Activated T-helper 1 cell treated with anti-CD3 and anti-CD28 coated beads, Interleukin-12 subunit alpha, Interleukin-12 subunit beta, Interleukin-2, Interleukin-4 antibody, amounts not matched to agents 30 ng/mL and 10 ng/mL and 1 ng/mL, durations not matched to agents 14 hours and 24 hours and 36 hours (primary cell): ENCODE measurements at regions of chr17 and their contacts with region 1.

Region 1: DNA sequence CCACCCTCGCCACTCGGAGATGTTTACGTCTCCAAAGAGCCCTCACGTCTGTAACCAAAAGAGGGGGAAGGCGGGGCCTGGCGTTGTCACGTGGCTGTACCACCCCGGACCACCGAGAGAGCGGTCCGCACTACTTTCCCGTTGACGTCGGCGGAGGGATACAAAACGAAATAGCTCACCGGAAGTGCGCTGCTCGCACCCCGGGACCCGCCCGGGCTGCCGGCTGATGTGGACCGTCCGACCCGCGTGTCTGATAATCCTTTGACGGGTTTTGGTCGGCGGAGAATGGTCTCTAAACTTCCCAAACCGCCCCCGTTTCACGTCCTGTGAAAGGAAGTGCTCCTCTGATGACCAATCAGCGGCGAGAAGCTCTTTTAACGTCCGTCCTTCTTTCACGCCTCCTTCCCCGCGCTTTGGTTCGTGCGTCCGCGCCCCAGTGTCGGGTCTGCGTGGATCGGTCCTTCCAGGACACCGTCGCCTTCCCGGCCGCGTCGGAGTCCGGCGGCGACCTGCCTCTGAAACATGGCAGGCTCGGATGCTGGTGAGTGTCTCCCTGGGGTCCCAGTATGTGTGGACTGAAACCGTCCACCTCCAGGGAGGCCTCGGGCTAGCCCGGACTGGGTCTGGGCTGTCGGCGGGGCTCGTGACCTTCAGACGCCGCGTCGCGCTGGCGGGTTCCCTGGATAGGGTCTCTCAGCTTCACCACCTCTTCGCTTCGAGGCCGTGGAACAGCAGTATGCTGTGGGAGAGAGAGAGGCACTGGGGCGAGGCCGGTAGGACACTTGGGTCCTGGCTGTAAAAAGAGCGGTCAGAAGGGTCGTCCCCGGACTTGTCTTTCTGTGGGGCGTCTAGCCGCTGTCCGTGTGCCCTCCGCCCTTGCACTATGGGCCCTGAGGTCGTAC is at the start of gene CEP95:
- DNase-seq: peak; percentile 93
- H3K4me3 Mint-ChIP-seq: peak within 1 kb of the TSS; percentile 97
- H3K27ac Mint-ChIP-seq: peak within 1 kb of the TSS; percentile 99
- H3K4me1 Mint-ChIP-seq: peaks cover 48% of the 10 kb centered on the region
- H3K27me3 Mint-ChIP-seq: no peaks in the 10 kb centered on the region
- total RNA-seq, gene CEP95: 42.4 and 46.4 TPM in 2 replicates

Region 2: GRCh38 chr17:63827002-63827771 is 679.6 kb before region 1 on chr17 and contains the starts of genes FTSJ3 and PSMC5:
- intact Hi-C with region 1: loop called (anchors 5 kb)
- DNase-seq: peak; percentile 94
- H3K4me3 Mint-ChIP-seq: peak within 1 kb of the TSS; percentile 96
- H3K27ac Mint-ChIP-seq: peak within 1 kb of the TSS; percentile 98
- H3K4me1 Mint-ChIP-seq: peaks cover 71% of the 10 kb centered on the region
- H3K27me3 Mint-ChIP-seq: no peaks in the 10 kb centered on the region
- total RNA-seq, gene FTSJ3: 95.6 and 100 TPM in 2 replicates
- total RNA-seq, gene PSMC5: 185 and 195 TPM in 2 replicates

Region 3: DNA sequence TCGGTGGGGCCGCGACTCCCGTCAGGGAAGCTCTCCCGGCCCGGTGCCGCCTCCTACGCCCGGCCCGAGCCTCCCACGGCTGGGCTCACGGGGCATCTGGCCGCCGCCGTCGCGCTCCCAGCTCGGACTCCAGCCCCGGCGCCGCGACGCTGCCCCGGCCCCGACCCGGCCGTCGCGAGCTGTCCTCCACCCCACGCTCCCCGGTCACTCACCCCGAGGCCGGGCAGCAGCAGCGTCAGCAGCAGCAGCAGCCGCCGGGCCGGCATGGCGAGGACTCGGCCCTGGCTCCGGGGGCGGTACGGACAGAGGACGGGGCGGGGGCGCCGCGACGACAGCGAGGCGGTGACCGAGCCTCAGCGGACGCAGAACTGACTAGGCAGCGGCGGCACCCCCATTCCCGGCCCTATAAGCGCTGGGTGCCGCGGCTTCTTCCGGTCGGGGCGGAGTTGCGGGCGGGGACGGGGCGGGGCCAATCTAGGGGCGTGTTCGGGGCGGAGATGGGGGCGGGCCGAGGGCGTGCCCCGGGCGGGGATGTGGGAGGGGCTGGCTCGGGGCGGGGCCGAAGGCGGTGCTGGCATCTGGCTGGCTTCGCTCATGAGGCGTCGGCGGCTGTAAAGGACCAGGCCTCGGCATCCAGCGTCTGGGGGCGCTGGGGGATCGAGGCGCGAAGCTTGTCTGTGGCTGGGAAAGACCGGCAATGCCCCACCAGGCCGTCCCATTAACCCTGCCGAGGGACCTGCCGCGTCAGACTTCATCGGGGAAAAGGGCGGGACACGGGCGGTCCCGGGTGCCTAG is 376.9 kb before region 1 on chr17 and contains the start of gene ERN1:
- intact Hi-C with region 1: loop called (anchors 1 kb)
- DNase-seq: peak; percentile 88
- H3K4me3 Mint-ChIP-seq: peak within 1 kb of the TSS; percentile 98
- H3K27ac Mint-ChIP-seq: peak within 1 kb of the TSS; percentile 93
- H3K4me1 Mint-ChIP-seq: peaks cover 68% of the 10 kb centered on the region
- H3K27me3 Mint-ChIP-seq: no peaks in the 10 kb centered on the region
- total RNA-seq, gene ERN1: 90.0 and 91.6 TPM in 2 replicates

Region 4: GRCh38 chr17:64491034-64491859 is 15.6 kb before region 1 on chr17:
- intact Hi-C with region 1: loop called (anchors 2 kb)
- DNase-seq: peak; percentile 53
- H3K4me3 Mint-ChIP-seq: no peak overlapping the region
- H3K27ac Mint-ChIP-seq: no peak overlapping the region
- H3K4me1 Mint-ChIP-seq: peaks cover 30% of the 10 kb centered on the region
- H3K27me3 Mint-ChIP-seq: no peaks in the 10 kb centered on the region

Region 5: DNA sequence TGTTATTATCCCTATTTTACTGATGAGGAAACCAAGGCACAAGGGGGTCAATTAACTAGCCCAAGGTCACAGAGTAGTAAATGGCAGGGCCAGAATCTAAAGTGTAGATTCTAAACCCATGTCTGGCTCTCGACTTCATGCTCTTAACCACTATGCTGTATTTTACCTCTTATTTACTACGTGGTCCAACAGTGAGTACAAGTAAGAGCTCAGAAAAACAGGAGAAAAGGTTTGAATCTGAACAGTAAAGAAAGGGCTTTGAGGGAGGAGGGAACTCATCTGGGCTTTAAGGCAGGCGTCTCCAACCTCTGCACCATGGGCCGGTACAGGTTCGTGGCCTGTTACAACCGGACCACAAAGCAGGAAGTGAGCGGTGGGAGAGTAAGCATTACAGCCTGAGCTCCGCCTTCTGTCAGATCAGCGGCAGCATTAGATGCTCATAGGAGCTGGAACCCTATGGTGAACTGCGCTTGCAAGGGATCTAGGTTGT is 92.4 kb after region 1 on chr17:
- intact Hi-C with region 1: loop called (anchors 2 kb)
- DNase-seq: peak; percentile 56
- H3K4me3 Mint-ChIP-seq: peak overlapping the region; percentile 55
- H3K27ac Mint-ChIP-seq: peak overlapping the region; percentile 67
- H3K4me1 Mint-ChIP-seq: peaks cover 29% of the 10 kb centered on the region
- H3K27me3 Mint-ChIP-seq: no peaks in the 10 kb centered on the region

Region 6: DNA sequence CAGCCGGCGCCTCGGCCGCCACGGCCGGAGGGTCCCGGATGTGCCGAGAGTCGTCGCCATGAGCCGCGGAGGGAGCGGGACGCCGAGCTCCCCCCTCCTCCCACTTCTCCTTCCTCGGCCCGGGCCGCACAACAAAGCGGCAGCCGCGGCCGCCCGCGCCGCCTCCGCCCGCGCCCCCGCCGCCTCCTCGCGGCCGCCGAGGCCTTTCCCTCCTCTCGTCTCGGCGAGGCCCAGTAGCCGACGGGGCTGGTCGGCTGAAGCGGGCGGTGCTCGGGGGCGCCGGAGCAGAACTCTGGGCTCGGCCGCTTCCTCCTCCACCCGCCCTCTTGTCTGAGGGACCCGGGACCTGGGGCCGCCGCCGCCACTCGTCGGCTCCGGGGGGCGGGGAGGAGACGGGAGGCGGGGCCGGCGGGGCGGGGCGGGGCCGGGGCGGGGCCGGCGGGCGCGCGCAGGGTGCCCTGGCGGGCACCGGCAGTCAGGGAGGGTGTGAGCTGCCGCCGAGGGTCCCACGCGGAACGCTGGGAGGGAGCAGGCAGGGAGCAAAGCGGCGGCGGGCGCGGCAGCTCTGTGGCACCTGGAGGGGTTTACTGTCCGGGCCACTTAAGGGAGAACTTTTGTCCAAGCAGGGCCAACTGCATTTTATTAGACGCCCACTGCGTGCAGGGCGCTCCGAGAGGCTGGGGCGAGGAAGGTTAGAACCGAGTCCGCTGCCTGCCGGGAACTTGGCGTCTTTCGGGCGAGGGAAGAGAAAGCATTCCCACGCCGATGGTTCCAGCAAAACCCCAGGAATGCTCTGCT is 155.3 kb after region 1 on chr17 and contains the start of gene SMURF2:
- intact Hi-C with region 1: loop called (anchors 1 kb)
- DNase-seq: peak; percentile 74
- H3K4me3 Mint-ChIP-seq: peak within 1 kb of the TSS; percentile 95
- H3K27ac Mint-ChIP-seq: peak within 1 kb of the TSS; percentile 97
- H3K4me1 Mint-ChIP-seq: peaks cover 28% of the 10 kb centered on the region
- H3K27me3 Mint-ChIP-seq: peaks cover 4% of the 10 kb centered on the region
- total RNA-seq, gene SMURF2: 10.8 and 11.1 TPM in 2 replicates

Region 7: DNA sequence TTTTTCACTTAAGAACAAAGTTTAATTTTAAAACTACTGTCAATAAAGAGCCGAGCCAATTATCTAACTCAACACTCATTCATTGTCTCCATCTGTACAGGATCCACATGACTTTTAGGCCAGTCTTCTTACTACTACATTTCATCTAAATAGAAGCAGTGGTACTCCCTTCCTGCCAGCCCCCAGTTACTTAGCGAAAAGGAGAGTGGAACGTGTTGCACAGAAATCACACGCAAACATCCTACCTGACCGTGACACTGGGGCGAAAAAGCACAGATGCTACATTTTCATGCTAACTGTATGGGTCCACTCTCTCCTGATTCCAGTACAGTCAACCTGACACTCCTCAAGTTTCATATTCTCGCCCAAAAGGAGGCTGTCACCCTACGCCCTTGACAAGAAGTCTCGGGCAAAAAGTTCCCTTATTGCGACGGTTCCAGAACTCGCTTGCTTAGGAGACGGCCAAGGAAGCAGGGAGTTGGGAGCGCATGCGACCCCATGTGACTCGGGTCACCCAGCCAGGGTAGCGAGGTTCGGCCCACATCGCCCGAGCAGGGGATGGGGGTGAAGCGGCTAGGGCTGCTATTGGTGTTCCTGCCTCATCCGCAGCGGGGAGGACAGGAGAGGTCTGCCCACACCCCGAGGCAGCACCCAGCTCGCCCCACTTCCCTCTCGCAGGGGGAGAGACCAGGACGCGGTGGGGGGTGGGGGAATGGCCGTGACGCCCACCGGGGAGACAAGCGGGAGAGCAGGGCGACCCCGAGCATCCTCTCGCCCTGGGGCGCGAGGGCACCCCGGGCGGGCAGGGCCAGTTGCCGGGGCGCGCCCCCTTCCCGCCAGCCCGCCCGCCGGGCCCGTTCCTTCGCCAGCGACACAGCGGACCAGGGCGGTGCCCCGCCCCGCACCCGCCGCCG is 548.8 kb after region 1 on chr17:
- intact Hi-C with region 1: loop called (anchors 5 kb)
- DNase-seq: peak; percentile 53
- H3K4me3 Mint-ChIP-seq: peak overlapping the region; percentile 94
- H3K27ac Mint-ChIP-seq: peak overlapping the region; percentile 93
- H3K4me1 Mint-ChIP-seq: peaks cover 32% of the 10 kb centered on the region
- H3K27me3 Mint-ChIP-seq: peaks cover 5% of the 10 kb centered on the region